H1 (cell line): ENCODE measurements at regions of chr10 and their contacts with region 1.

Region 1: GRCh38 chr10:58952747-58953466 is 223.5 kb upstream of the PHYHIPL start:
- DNase-seq: peak in 1 of 2 experiments; percentile 69
- H3K4me3 ChIP-seq: no peak overlapping the region
- H3K27ac ChIP-seq: no peak overlapping the region
- H3K4me1 ChIP-seq: no peaks in the 10 kb centered on the region
- H3K27me3 ChIP-seq: no peaks in the 10 kb centered on the region
- CTCF ChIP-seq: peak in 2 of 3 experiments; percentile 56 to 69; a peak in 3 of 4 replicates
- EP300 ChIP-seq: no peak
- POLR2A ChIP-seq: no peak
- RAD21 ChIP-seq: peak; percentile 89 to 91

Region 2: DNA sequence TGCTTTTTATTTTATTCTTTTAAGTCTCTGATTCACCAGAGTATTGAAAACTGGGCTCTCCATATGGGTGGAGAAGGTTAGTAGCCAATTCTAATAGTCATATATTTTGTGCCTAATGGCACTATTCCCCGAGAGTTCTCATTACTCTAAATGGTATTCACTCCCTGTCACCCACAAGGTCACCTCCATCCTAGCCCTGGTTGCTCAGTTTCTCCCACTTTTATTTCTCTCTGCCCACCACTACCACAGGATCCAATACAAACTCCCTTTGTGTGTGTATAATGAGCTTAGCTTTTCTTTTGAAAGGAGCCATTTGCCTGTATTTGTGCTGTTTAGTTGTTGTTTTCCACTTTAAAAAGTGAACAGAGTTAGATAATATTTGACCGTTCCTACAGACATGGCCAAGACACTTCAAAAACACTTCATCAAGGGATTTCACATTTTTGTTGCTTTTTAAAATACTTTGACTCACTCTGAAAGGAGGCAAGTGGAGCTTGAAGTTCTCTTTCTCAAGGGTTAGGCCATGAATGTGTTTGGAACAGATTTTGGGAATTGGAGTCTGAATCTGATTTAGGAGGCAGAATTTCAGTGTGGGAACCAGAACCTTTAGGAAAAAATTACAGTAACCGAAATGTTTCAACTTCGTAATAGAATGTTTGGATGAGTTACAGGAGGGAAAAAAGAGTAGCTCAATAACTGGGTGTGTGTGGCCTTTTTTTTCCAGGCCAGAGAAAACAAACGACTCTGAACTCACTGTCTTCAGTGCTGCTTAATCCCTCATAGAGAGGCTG is 118.9 kb before region 1 on chr10:
- CTCF ChIA-PET with region 1: no interaction called
- POLR2A ChIA-PET with region 1: no interaction called
- DNase-seq: no peak
- H3K4me3 ChIP-seq: no peak overlapping the region
- H3K27ac ChIP-seq: no peak overlapping the region
- H3K4me1 ChIP-seq: no peaks in the 10 kb centered on the region
- H3K27me3 ChIP-seq: no peaks in the 10 kb centered on the region
- CTCF ChIP-seq: no peak
- EP300 ChIP-seq: no peak
- POLR2A ChIP-seq: no peak
- RAD21 ChIP-seq: no peak

Region 3: DNA sequence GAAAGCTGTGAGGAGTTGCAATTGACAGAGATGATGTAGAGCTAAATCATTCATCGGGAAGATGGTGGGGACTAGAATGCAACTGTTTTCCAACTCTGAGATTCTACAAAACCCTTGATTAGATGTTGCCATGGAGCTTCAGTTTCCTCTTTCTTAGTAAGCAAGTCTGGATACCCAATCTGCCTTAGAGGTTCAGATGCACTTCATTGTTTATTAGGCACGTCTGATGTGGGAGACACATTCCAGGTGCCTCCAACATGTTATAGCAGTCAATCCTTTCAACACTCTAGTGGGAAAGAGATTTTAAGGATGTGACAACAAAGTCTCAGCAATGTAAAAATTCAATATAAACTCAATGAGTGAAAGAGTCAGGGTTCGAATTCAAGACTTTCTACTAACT is 67.8 kb before region 1 on chr10:
- CTCF ChIA-PET with region 1: no interaction called
- POLR2A ChIA-PET with region 1: no interaction called
- DNase-seq: no peak
- H3K4me3 ChIP-seq: no peak overlapping the region
- H3K27ac ChIP-seq: no peak overlapping the region
- H3K4me1 ChIP-seq: no peaks in the 10 kb centered on the region
- H3K27me3 ChIP-seq: no peaks in the 10 kb centered on the region
- CTCF ChIP-seq: no peak
- EP300 ChIP-seq: no peak
- POLR2A ChIP-seq: no peak
- RAD21 ChIP-seq: no peak

Region 4: DNA sequence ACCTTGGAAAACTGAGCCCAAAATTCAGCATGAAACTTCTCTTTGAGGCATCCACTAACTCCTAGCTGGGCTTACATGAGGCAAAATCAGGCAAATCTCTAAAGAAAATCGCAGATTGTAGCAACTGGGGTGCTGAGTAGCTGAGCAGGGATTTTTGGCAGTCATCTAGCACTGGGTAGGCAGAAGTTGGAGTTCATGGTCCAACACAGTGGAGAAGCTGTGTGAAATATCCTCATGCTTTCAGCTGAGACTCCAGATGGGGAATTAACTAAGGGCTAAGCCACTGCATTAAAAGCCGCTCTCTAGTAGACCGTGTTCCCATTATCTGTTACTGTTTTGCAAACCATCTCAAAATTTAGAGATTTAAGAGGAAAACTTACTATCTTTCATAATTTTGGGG is 16.5 kb before region 1 on chr10:
- CTCF ChIA-PET with region 1: interaction called, 16 read pairs
- POLR2A ChIA-PET with region 1: interaction called, 3 read pairs
- DNase-seq: no peak
- H3K4me3 ChIP-seq: no peak overlapping the region
- H3K27ac ChIP-seq: no peak overlapping the region
- H3K4me1 ChIP-seq: no peaks in the 10 kb centered on the region
- H3K27me3 ChIP-seq: no peaks in the 10 kb centered on the region
- CTCF ChIP-seq: no peak
- EP300 ChIP-seq: no peak
- POLR2A ChIP-seq: no peak
- RAD21 ChIP-seq: no peak

Region 5: DNA sequence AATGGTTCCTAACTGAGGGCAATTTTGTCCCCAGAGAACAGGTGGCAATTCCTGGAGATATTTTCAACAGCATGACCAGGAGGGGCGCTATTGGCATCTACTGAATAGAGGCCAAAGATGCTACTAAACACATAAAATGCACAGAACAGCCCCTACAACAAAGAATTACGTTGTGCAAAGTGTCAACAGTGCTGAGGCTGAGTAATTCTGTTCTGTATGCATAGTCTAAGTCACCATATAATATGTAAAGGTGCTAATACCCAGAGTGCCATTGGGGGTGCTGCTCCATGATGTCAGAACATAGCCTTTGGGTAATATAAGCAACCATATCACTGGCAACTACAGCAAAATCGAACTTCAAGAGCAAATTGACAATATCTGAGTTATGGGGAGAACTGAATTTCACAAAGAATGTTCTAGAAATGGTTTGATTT is 10.2 kb after region 1 on chr10:
- CTCF ChIA-PET with region 1: interaction called, 16 read pairs
- POLR2A ChIA-PET with region 1: no interaction called
- DNase-seq: peak in 1 of 2 experiments; percentile 68
- H3K4me3 ChIP-seq: no peak overlapping the region
- H3K27ac ChIP-seq: no peak overlapping the region
- H3K4me1 ChIP-seq: peaks cover 4 to 20% (median 13%) of the 10 kb centered on the region in 4 experiments; a peak in 6 of 7 replicates
- H3K27me3 ChIP-seq: peaks cover 11 to 51% (median 31%) of the 10 kb centered on the region in 4 experiments
- CTCF ChIP-seq: peak in 2 of 3 experiments; percentile 60 to 75; a peak in 3 of 4 replicates
- EP300 ChIP-seq: no peak
- POLR2A ChIP-seq: no peak
- RAD21 ChIP-seq: peak; percentile 48 to 65

Region 6: GRCh38 chr10:59181668-59182067 is 228.8 kb after region 1 on chr10:
- CTCF ChIA-PET with region 1: interaction called, 25 read pairs
- POLR2A ChIA-PET with region 1: no interaction called
- DNase-seq: no peak
- H3K4me3 ChIP-seq: no peak overlapping the region
- H3K27ac ChIP-seq: no peak overlapping the region
- H3K4me1 ChIP-seq: no peaks in the 10 kb centered on the region
- H3K27me3 ChIP-seq: peaks cover 0 to 13% (median 9%) of the 10 kb centered on the region in 4 experiments; a peak in 6 of 7 replicates
- CTCF ChIP-seq: peak in 2 of 3 experiments; percentile 63 to 65; a peak in 3 of 4 replicates
- EP300 ChIP-seq: no peak
- POLR2A ChIP-seq: no peak
- RAD21 ChIP-seq: peak; percentile 81 to 83